ENCODE measurements at regions of chr5 and their contacts with region 1.

Region 1: DNA sequence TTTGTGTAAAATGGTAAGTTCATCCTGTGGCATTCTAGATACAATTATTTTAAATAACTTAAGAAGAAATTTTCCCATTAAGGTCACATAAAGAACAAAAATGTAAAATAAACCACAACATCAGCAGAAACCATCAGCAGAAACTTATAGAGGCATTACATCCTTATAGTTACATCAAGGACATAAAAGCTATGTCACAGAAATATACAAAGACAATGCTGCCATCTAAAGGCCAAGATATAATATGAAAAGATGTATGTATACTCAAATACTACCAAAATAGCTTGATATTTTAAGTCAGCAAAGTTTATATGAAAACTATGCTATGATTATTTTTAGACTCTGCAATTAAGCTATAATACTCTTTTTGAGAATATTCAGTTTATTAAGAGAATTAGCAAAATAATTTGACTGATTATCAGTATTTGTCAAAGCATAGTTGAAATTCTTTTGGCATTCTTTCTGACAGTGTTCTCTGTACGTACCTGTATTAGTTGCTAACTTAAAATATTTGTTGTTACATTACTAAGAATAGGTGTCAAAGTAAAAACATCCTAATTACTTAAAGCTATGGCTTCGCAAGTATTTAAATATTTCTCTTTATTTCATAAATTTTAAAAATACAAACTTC is 36.2 kb downstream of the FBXL17 start:
- DNase-seq: peak in 4 of 5 donors; percentile 29 to 37 (median 34)
- H3K4me3 ChIP-seq: no peak overlapping the region
- H3K4me3 Mint-ChIP-seq: no peak overlapping the region
- H3K27ac ChIP-seq: no peak overlapping the region
- H3K27ac Mint-ChIP-seq: no peak overlapping the region
- H3K4me1 ChIP-seq: no peaks in the 10 kb centered on the region
- H3K4me1 Mint-ChIP-seq: peaks cover 0 to 6% (median 4%) of the 10 kb centered on the region in 4 donors
- H3K27me3 ChIP-seq: no peaks in the 10 kb centered on the region
- H3K27me3 Mint-ChIP-seq: no peaks in the 10 kb centered on the region

Region 2: GRCh38 chr5:107571621-107572536 is 773.8 kb before region 1 on chr5:
- CTCF ChIA-PET with region 1: no interaction called
- POLR2A ChIA-PET with region 1: no interaction called
- intact Hi-C with region 1: loop called (anchors 5 kb)
- DNase-seq: peak; percentile 73 to 79 (median 75)
- H3K4me3 ChIP-seq: peak overlapping the region; percentile 41 to 82
- H3K4me3 Mint-ChIP-seq: peak overlapping the region; percentile 81 to 93 (median 84)
- H3K27ac ChIP-seq: no peak overlapping the region
- H3K27ac Mint-ChIP-seq: peak overlapping the region in 4 of 7 donors; percentile 21 to 88 (median 56)
- H3K4me1 ChIP-seq: peaks cover 10% of the 10 kb centered on the region
- H3K4me1 Mint-ChIP-seq: peaks cover 9 to 22% (median 16%) of the 10 kb centered on the region in 4 donors
- H3K27me3 ChIP-seq: no peaks in the 10 kb centered on the region
- H3K27me3 Mint-ChIP-seq: peaks cover 9 to 13% of the 10 kb centered on the region in 2 donors

Region 3: DNA sequence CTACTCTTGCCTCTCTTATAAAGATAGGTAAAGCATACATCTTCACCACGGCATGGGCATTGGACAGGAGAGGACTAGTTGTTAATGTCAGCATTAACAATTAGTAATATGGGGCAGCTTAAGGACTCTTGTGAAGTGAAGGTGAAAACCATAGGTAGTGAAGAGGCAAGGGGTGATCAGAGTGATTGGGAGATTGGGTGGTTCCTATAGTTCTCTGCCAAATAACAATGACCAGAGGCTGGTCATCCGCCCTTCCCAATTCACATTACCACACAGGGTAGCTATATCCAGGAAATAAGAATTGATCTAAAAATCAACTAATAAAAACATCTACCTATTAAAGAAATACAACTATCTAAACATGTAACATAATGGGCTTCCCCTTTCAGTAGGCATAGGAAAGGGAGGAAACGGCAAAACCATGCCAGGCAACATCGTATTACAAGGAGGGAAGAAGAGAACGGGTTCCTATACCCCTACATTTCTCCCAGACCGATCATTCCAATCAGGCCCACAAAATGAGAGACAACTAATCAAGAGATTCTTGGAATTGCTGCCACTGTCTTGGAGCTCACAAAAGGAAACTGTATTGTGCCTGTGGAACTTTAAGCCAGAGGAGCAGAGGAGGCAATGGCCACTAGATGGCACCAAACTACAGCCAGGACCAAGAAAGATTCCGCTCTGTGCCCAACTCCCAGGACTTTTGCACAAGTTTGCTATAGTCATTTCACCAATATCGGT is 85.4 kb before region 1 on chr5:
- CTCF ChIA-PET with region 1: interaction called, 68 read pairs
- POLR2A ChIA-PET with region 1: no interaction called
- intact Hi-C with region 1: loop called (anchors 1 kb)
- DNase-seq: peak; percentile 54 to 62 (median 57)
- H3K4me3 ChIP-seq: no peak overlapping the region
- H3K4me3 Mint-ChIP-seq: peak overlapping the region in 2 of 8 donors; percentile 33 to 35
- H3K27ac ChIP-seq: no peak overlapping the region
- H3K27ac Mint-ChIP-seq: peak overlapping the region in 1 of 7 donors; percentile 11
- H3K4me1 ChIP-seq: no peaks in the 10 kb centered on the region
- H3K4me1 Mint-ChIP-seq: peaks cover 5 to 12% (median 8%) of the 10 kb centered on the region in 4 donors
- H3K27me3 ChIP-seq: no peaks in the 10 kb centered on the region
- H3K27me3 Mint-ChIP-seq: no peaks in the 10 kb centered on the region

Region 4: GRCh38 chr5:108381954-108382783 is 36.5 kb after region 1 on chr5 and contains the start of gene FBXL17:
- CTCF ChIA-PET with region 1: interaction called, 7 read pairs
- POLR2A ChIA-PET with region 1: interaction called, 8 read pairs
- intact Hi-C with region 1: loop called (anchors 5 kb)
- DNase-seq: peak; percentile 92 to 96 (median 94)
- H3K4me3 ChIP-seq: peak within 1 kb of the TSS; percentile 71 to 82
- H3K4me3 Mint-ChIP-seq: peak within 1 kb of the TSS; percentile 86 to 98 (median 90)
- H3K27ac ChIP-seq: peak within 1 kb of the TSS; percentile 91
- H3K27ac Mint-ChIP-seq: peak within 1 kb of the TSS; percentile 87 to 99 (median 98)
- H3K4me1 ChIP-seq: peaks cover 36% of the 10 kb centered on the region
- H3K4me1 Mint-ChIP-seq: peaks cover 25 to 47% (median 34%) of the 10 kb centered on the region in 4 donors
- H3K27me3 ChIP-seq: no peaks in the 10 kb centered on the region
- H3K27me3 Mint-ChIP-seq: no peaks in the 10 kb centered on the region
- total RNA-seq, gene FBXL17: 23.3 to 27.5 TPM

Region 5: DNA sequence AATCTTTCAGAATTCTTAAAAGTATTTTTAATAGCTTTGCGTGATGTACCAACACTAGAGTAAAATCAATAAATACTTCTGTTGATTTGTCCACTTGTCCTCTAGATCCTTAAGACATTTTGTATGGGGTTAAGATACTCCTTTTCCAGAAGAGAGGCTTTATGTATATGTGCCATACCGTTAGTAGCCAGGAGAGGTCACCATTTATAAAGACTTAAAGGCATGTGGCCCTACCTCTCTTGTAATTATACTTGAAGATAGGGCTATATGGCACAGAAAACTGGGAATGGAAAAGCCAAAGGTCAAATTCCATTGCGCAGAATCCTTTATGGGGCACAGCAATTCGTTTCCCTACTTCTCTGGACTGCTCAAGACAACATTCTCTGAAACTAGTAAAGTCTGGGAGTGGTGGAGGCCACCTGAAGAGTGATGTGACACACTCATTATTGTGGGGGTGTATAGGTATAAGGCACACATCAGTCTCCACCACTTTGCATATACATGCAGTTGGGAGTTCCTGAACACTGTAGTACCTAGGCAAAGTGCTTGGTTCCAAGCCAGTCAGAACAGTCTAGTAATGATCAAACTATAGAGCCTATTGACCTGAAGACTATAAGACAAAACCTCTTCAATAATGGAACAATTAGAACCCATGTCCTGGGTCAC is 176.3 kb after region 1 on chr5:
- CTCF ChIA-PET with region 1: no interaction called
- POLR2A ChIA-PET with region 1: no interaction called
- intact Hi-C with region 1: no loop called
- DNase-seq: peak in 4 of 5 donors; percentile 12 to 31 (median 22)
- H3K4me3 ChIP-seq: no peak overlapping the region
- H3K4me3 Mint-ChIP-seq: no peak overlapping the region
- H3K27ac ChIP-seq: no peak overlapping the region
- H3K27ac Mint-ChIP-seq: no peak overlapping the region
- H3K4me1 ChIP-seq: no peaks in the 10 kb centered on the region
- H3K4me1 Mint-ChIP-seq: no peaks in the 10 kb centered on the region
- H3K27me3 ChIP-seq: no peaks in the 10 kb centered on the region
- H3K27me3 Mint-ChIP-seq: peaks cover 10 to 20% of the 10 kb centered on the region in 2 donors

Measured in CD4-positive, alpha-beta memory T cell (primary cell).